ENCODE measurements at regions of chr3 and their contacts with region 1.

Region 1: DNA sequence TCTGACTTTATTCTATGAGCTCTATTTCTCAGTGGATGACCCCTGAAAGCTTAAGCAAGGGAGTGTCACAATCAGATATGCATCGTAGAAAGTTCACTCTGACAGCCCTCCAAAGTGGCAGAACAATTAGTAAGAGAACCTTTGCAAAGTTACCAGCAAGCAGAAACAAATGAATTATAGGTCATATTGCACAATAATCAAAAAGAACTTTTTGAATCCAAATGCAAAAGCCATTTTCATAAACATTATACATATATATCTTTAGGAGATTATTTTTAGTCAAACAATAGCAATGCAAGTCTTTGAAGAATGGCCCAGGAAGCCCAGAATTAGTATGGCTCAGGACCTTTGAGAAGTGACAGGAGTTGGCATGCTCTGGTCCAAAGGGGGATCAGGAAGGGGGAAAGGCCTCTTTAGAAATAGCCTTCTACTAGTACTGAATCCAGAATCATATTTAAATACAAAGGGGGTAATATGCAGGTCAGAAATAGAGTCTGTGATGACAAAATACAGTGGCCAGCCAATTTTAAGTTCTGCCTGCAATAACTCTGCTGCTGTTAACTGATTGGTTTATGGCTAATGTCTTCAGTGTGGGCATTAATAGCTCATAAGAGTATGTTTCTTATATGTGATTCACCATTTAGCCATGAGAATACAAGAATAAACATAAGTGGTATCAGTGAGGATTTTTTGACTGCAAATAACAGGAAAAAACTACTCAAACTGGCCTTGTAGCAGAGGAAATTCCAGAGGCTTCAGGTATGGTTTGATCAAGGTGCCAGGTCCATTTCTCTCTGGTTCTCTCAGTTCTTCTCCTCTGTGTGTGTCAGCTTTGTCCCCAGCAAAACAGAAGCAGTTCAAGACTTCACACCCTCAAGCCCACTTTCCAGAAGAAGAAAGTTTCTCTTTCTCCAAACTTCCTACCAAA is 17.0 kb upstream of the ITGB5 start:
- DNase-seq: no peak
- H3K4me3 ChIP-seq: no peak overlapping the region
- CTCF ChIP-seq: no peak
- POLR2A ChIP-seq: no peak

Region 2: DNA sequence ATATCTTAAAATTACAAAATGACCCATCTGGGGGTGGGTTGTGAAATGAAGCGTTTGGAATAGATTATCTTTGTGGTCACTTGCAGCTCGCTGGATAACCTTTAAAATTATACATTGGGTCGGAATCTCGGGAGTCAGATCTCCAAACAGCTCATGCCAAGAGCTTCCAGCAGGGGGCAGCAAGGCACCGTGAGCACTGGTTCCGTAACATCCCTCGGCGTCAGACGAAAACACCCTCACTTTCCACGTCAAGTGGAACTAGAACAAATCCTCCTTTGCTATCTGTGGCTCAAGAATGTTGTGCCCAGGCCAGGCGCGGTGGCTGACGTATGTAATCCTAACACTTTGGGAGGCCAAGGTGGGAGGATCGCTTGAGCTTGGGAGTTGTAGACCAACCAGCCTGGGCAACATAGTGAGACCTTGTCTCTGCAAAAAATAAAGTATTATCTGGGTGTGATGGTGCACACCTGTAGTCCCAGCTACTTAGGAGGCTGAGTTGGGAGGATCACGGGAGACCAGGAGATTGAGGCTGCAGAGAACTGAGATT is 142.8 kb before region 1 on chr3:
- intact Hi-C with region 1: loop called (anchors 2 kb)
- DNase-seq: peak; percentile 89 to 98
- H3K4me3 ChIP-seq: no peak overlapping the region
- CTCF ChIP-seq: peak in 1 of 3 donors; percentile 85
- POLR2A ChIP-seq: no peak

Region 3: DNA sequence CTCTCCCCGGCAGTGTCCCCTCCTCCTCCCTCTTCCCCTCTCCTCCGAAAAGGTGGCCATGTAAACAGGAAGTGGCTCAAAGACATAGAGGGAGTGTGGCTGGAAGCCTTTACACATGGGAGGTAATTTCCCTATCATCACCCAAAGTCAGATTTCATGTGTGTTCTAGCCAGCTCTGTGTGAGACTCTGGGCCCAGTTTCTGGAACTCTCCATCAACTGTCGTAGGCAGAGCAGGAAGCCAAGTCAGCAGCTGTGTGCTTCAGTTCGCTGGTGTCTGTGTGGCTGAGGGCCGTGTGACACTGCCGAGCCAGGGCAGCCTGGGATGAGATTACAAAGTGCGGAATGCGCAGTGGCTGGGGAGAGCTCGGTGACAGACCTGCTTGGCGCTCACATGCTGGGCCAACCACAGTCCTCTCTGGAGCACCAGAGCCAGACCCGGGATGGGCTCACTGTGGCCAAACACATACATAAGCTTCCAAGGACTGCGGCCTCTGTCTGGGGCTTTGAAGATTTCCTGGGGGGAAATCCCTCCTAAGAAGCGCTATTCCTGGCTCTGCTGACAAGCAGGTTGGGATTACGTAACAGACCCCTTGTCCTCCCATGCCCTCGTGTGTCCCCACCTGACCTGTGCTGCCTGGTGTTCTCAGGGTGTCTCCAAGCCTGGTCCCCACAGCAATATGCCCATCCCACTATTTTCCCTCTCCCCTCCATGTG is 123.3 kb before region 1 on chr3:
- intact Hi-C with region 1: no loop called
- DNase-seq: peak; percentile 76 to 94
- H3K4me3 ChIP-seq: no peak overlapping the region
- CTCF ChIP-seq: no peak
- POLR2A ChIP-seq: no peak

Region 4: DNA sequence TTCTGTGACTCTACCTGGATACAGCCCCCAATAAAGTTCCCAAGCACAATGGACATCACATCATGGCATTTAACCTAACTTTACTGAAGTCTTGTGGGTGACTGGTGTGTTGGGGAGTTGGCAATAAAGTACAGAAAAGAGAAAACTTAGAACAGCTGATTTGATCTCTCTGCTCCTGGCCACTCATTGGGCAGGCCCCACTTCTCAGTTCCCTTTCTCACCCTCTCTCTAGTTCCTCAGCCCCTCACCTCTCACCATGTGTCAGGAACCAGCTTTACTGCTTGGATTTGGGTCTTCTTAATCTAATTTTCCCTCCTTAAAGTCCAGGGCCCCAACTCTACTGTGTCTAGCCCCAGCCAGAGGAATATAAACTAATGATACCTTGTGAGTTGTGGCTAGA is 31.1 kb after region 1 on chr3:
- intact Hi-C with region 1: no loop called
- DNase-seq: no peak
- H3K4me3 ChIP-seq: no peak overlapping the region
- CTCF ChIP-seq: no peak
- POLR2A ChIP-seq: no peak

Measured in lower leg skin (tissue), 4 donors.